ENCODE measurements at regions of chr1 and their contacts with region 1.

Region 1: DNA sequence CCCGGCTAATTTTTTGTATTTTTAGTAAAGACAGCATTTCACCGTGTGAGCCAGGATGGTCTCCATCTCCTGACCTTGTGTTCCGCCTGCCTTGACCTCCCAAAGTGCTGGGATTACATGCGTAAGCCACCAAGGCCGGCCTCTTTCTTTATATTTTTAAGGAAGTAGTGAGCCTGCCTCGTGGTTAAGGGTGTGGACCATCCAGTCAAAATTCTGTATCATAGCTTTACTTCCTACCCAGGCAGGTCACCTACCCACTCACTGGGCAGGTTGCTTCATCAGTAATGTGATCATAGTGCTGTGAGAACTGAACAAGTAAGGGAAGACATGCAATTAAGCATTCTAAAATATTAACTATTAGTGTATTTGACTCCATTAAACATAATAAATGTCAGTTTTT is 8.1 kb upstream of the ACOT7 start:
- DNase-seq: no peak
- H3K4me3 ChIP-seq: no peak overlapping the region
- H3K4me1 ChIP-seq: no peaks in the 10 kb centered on the region; the same call in 1 of the 2 replicates
- H3K27me3 ChIP-seq: no peaks in the 10 kb centered on the region

Region 2: GRCh38 chr1:5688081-5689077 is 713.3 kb before region 1 on chr1:
- in situ Hi-C with region 1: no loop called
- DNase-seq: no peak
- H3K4me3 ChIP-seq: no peak overlapping the region
- H3K4me1 ChIP-seq: no peaks in the 10 kb centered on the region
- H3K27me3 ChIP-seq: no peaks in the 10 kb centered on the region

Region 3: GRCh38 chr1:6367381-6368012 is 34.2 kb before region 1 on chr1:
- in situ Hi-C with region 1: loop called (anchors 5 kb)
- DNase-seq: no peak
- H3K4me3 ChIP-seq: no peak overlapping the region
- H3K4me1 ChIP-seq: no peaks in the 10 kb centered on the region
- H3K27me3 ChIP-seq: no peaks in the 10 kb centered on the region

Region 4: DNA sequence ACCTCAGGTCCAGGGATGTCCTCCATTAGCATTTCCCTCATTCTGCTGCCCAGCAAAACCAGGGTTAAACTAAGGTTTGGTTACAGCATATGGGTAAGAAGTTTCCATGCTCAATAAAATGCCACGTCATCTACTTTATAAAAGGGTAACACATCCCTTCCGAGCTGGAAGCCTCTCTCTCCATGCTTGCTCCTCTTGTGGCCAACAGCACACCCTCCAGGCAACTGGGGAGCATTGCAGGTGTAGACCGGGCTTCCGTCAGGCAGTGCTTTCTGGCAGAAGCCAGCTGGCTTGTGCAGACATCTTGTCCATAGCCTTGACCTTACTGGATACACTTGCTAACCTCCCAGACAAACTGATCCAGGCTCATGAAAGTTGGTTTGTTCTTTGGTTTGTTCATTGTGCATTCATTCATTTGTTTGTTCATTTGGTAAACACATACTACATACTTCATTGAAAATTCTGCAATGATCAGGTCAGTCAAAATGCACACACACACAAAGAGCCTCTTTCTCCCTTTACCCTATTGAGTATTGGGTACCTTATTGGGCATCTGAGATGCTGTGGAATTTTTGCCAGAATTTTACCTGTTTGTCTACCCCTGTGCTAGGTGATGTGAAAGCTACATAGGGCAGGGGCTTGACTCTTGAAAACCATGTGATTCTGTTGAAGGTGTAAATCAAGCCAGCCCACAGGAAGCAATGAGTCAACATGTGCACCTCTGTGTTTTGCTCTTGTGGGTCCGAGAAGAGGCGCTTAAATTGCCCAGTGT is 806.4 kb after region 1 on chr1:
- in situ Hi-C with region 1: no loop called
- DNase-seq: peak; percentile 47 to 73
- H3K4me3 ChIP-seq: no peak overlapping the region
- H3K4me1 ChIP-seq: no peaks in the 10 kb centered on the region
- H3K27me3 ChIP-seq: peaks cover 16% of the 10 kb centered on the region; the same call in 1 of the 2 replicates